ENCODE measurements at regions of chr1 and their contacts with region 1.

Region 1: DNA sequence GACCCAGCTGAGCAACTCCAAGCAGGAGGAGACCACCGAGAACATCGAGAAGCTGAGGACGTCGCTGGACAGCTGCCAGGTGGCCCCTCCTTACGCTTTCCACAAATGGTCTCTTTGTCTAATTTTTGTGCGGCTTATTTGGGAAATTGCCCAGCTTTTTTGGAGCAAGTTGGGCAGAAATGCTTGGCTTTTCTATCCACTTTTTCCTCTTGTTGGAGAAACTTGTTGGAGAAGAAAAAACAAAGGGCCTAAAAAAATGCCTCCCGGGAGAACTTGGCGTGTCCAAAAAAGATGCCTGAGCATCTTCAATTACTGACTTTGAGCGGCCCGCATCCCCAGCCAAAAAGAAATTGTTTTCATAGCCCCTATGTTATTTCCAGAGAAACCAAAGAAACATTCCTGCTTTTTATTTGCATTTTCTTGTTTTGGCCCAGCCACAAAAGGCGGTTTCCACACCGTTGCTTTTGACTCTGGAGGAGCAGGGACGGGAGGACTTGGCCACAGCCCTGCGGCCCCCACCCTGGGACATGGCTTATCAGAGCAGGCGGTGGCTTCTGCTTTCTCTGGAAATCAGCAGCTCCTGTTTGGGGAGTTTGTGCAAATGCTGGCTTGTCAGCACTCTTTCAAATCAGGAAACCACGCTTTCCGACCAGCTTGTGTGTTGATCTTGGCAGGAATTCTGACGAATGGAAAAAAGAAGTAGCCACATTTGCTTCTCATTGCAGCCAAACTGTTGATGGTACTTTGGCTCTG is 81.2 kb upstream of the EFHD2 start:
- DNase-seq: peak; percentile 81
- H3K4me3 ChIP-seq: no peak overlapping the region
- H3K27ac ChIP-seq: peak overlapping the region; percentile 7 to 31
- H3K4me1 ChIP-seq: peaks cover 32% of the 10 kb centered on the region
- H3K27me3 ChIP-seq: no peaks in the 10 kb centered on the region
- CTCF ChIP-seq: no peak
- POLR2A ChIP-seq: no peak

Region 2: GRCh38 chr1:15426492-15427279 is 98.2 kb after region 1 on chr1:
- intact Hi-C with region 1: loop called (anchors 5 kb)
- DNase-seq: peak; percentile 83
- H3K4me3 ChIP-seq: no peak overlapping the region
- H3K27ac ChIP-seq: peak overlapping the region; percentile 24 to 41
- H3K4me1 ChIP-seq: peaks cover 42% of the 10 kb centered on the region
- H3K27me3 ChIP-seq: no peaks in the 10 kb centered on the region
- CTCF ChIP-seq: peak; percentile 37 to 60 (median 51)
- POLR2A ChIP-seq: no peak